H1 (cell line): ENCODE measurements at regions of chr4 and their contacts with region 1.

Region 1: GRCh38 chr4:52712172-52712990 is 38.8 kb downstream of the ERVMER34-1 start:
- DNase-seq: peak; percentile 92 to 98
- H3K4me3 ChIP-seq: peak overlapping the region; percentile 87 to 96 (median 92)
- H3K27ac ChIP-seq: peak overlapping the region; percentile 94
- H3K4me1 ChIP-seq: peaks cover 3 to 15% (median 10%) of the 10 kb centered on the region in 4 experiments; a peak in 6 of 7 replicates
- H3K27me3 ChIP-seq: no peaks in the 10 kb centered on the region
- CTCF ChIP-seq: no peak
- EP300 ChIP-seq: no peak
- POLR2A ChIP-seq: peak; percentile 92 to 93
- RAD21 ChIP-seq: no peak

Region 2: DNA sequence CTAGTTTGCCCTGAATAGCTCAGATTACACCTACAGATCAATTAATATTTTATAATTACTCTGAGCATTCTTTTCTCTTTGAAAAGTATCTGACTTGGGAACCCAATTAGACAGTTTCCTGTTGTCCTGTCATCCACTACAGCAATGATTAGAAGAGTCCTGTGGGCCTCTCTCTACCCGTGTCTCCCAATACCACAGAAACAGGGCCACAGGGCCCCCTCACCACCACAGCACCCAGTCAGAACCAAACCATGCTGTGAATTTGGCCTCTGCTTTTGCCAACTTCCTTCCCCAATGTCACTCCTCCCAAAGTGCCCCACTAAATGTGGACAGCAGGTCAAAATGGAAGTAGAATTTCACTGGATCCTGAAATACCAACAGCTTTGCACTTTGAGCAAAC is 63.5 kb before region 1 on chr4:
- CTCF ChIA-PET with region 1: no interaction called
- POLR2A ChIA-PET with region 1: interaction called, 10 read pairs
- DNase-seq: no peak
- H3K4me3 ChIP-seq: no peak overlapping the region
- H3K27ac ChIP-seq: no peak overlapping the region
- H3K4me1 ChIP-seq: peaks cover 0 to 11% (median 5%) of the 10 kb centered on the region in 4 experiments; a peak in 3 of 7 replicates
- H3K27me3 ChIP-seq: no peaks in the 10 kb centered on the region
- CTCF ChIP-seq: no peak
- EP300 ChIP-seq: no peak
- POLR2A ChIP-seq: no peak
- RAD21 ChIP-seq: no peak

Region 3: DNA sequence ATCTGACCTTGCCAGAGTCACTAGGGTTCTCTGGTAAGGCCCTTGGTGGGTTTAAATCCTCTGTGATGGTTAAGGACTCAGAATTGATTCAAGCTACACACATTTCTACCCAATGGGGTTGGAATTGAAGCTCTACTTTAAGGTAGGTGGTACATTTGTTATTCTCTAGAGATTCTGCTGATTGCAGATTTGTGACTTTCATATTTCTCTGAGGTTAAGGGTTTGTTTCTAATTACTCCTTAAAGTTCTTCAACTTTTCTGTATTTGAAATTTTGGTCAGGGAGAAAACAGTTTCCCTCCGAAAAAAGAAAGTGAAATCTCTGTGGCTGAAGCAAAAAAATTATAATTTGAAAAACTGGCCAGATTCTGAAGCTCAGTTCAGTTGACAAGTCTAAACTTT is 27.5 kb before region 1 on chr4:
- CTCF ChIA-PET with region 1: no interaction called
- POLR2A ChIA-PET with region 1: interaction called, 25 read pairs
- DNase-seq: no peak
- H3K4me3 ChIP-seq: no peak overlapping the region
- H3K27ac ChIP-seq: no peak overlapping the region
- H3K4me1 ChIP-seq: peaks cover 0 to under 1% (median 0%) of the 10 kb centered on the region in 4 experiments; a peak in 1 of 7 replicates
- H3K27me3 ChIP-seq: no peaks in the 10 kb centered on the region
- CTCF ChIP-seq: no peak
- EP300 ChIP-seq: no peak
- POLR2A ChIP-seq: no peak
- RAD21 ChIP-seq: no peak

Region 4: DNA sequence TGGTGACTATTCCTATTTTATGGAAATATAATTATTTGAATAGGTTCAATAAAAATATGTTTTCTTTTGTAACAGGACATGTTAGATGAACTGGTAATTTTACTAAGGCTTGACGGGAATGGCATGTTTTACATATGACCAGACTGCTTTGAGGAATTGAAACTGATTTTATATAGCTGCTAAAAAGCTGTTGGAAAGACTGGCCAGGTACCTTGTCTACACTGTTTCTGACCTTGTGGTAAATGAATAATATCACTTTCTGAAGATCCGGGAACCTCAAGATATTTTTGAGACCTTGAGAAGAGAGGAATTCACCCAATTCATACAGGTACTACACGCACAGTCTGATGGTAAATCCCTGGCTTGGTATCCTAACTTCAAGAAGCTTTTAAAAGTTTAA is 11.2 kb before region 1 on chr4:
- CTCF ChIA-PET with region 1: interaction called, 4 read pairs
- POLR2A ChIA-PET with region 1: interaction called, 16 read pairs
- DNase-seq: no peak
- H3K4me3 ChIP-seq: no peak overlapping the region
- H3K27ac ChIP-seq: no peak overlapping the region
- H3K4me1 ChIP-seq: no peaks in the 10 kb centered on the region
- H3K27me3 ChIP-seq: no peaks in the 10 kb centered on the region
- CTCF ChIP-seq: no peak
- EP300 ChIP-seq: no peak
- POLR2A ChIP-seq: no peak
- RAD21 ChIP-seq: no peak

Region 5: GRCh38 chr4:52750819-52751486 is 38.6 kb after region 1 on chr4 and contains the start of gene ERVMER34-1:
- CTCF ChIA-PET with region 1: no interaction called
- POLR2A ChIA-PET with region 1: interaction called, 26 read pairs
- DNase-seq: peak; percentile 1 to 77
- H3K4me3 ChIP-seq: peak within 1 kb of the TSS; percentile 17 to 63 (median 25); a peak in 7 of 8 replicates
- H3K27ac ChIP-seq: peak within 1 kb of the TSS; percentile 14; the same call in 1 of the 2 replicates
- H3K4me1 ChIP-seq: no peaks in the 10 kb centered on the region; a peak in 1 of 7 replicates
- H3K27me3 ChIP-seq: peaks cover 0 to 18% (median 13%) of the 10 kb centered on the region in 4 experiments; a peak in 6 of 7 replicates
- CTCF ChIP-seq: no peak
- EP300 ChIP-seq: no peak
- POLR2A ChIP-seq: no peak
- RAD21 ChIP-seq: 0 out of 4 replicates have a peak, but pooled peaks of 1 of the 2 experiments have one; percentile 2
- total RNA-seq, gene ERVMER34-1: 31.6 and 34.3 TPM in 2 replicates

Region 6: GRCh38 chr4:52869196-52869595 is 156.8 kb after region 1 on chr4:
- CTCF ChIA-PET with region 1: no interaction called
- POLR2A ChIA-PET with region 1: interaction called, 45 read pairs
- DNase-seq: no peak
- H3K4me3 ChIP-seq: no peak overlapping the region
- H3K27ac ChIP-seq: no peak overlapping the region
- H3K4me1 ChIP-seq: peaks cover 7 to 24% (median 15%) of the 10 kb centered on the region in 4 experiments
- H3K27me3 ChIP-seq: no peaks in the 10 kb centered on the region; a peak in 2 of 7 replicates
- CTCF ChIP-seq: no peak
- EP300 ChIP-seq: no peak
- POLR2A ChIP-seq: no peak
- RAD21 ChIP-seq: no peak